Caco-2 (cell line): ENCODE measurements at regions of chr7 and their contacts with region 1.

Region 1: DNA sequence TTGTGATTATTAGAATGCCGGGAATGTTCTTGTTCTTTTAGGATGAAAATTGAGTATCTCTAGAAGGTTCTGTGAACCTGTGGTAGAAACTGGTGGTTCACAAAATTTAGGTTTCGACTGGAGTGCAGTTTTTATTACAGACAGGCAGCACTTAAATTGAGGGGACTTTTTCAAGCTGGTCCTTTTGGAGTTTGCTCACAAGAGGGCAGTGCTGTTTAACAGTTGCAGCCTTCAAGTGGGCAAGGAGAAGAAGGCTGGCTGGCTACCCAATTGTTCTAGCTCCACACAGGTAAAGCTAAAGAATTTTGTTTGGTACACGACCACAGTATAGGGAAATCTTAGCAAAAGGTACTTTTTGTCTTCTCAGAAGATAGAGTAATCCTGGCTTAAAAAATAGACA is 233.6 kb downstream of the SNX13 start:
- DNase-seq: peak; percentile 63 to 68
- H3K4me3 ChIP-seq: no peak overlapping the region
- H3K4me3 Mint-ChIP-seq: no peak overlapping the region
- H3K27ac Mint-ChIP-seq: no peak overlapping the region
- H3K4me1 ChIP-seq: no peaks in the 10 kb centered on the region
- H3K4me1 Mint-ChIP-seq: no peaks in the 10 kb centered on the region
- H3K27me3 ChIP-seq: peaks cover 1% of the 10 kb centered on the region; the same call in 1 of the 2 replicates
- H3K27me3 Mint-ChIP-seq: peaks cover 5% of the 10 kb centered on the region
- CTCF ChIP-seq: peak; percentile 78 to 80

Region 2: GRCh38 chr7:17732083-17732482 is 25.3 kb after region 1 on chr7:
- CTCF ChIA-PET with region 1: no interaction called
- POLR2A ChIA-PET with region 1: no interaction called
- intact Hi-C with region 1: no loop called
- DNase-seq: no peak
- H3K4me3 ChIP-seq: no peak overlapping the region
- H3K4me3 Mint-ChIP-seq: no peak overlapping the region
- H3K27ac Mint-ChIP-seq: no peak overlapping the region
- H3K4me1 ChIP-seq: no peaks in the 10 kb centered on the region
- H3K4me1 Mint-ChIP-seq: no peaks in the 10 kb centered on the region
- H3K27me3 ChIP-seq: no peaks in the 10 kb centered on the region
- H3K27me3 Mint-ChIP-seq: peaks cover 3% of the 10 kb centered on the region
- CTCF ChIP-seq: no peak

Region 3: DNA sequence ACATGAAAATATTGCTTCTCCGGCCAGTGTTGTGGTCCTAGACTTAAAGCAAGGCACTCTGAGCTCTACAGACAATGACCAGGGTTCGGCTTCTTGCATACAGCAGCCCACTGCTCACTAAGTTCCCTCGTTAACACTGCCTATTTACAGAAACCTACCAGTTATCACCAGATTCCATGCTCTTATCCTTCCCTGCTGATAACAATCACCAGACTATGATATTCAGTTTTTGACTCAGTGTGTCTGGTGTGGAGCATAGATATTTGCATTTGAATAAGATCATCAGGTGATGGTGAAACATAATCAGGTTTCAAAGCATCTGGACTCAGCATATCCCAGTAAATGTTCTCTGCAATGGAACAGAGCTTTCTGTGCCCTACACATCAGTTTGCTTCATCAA is 51.3 kb after region 1 on chr7:
- CTCF ChIA-PET with region 1: no interaction called
- POLR2A ChIA-PET with region 1: no interaction called
- intact Hi-C with region 1: loop called (anchors 1 kb)
- DNase-seq: no peak
- H3K4me3 ChIP-seq: no peak overlapping the region
- H3K4me3 Mint-ChIP-seq: no peak overlapping the region
- H3K27ac Mint-ChIP-seq: no peak overlapping the region
- H3K4me1 ChIP-seq: peaks cover 16% of the 10 kb centered on the region
- H3K4me1 Mint-ChIP-seq: peaks cover 12% of the 10 kb centered on the region
- H3K27me3 ChIP-seq: no peaks in the 10 kb centered on the region
- H3K27me3 Mint-ChIP-seq: no peaks in the 10 kb centered on the region
- CTCF ChIP-seq: no peak

Region 4: DNA sequence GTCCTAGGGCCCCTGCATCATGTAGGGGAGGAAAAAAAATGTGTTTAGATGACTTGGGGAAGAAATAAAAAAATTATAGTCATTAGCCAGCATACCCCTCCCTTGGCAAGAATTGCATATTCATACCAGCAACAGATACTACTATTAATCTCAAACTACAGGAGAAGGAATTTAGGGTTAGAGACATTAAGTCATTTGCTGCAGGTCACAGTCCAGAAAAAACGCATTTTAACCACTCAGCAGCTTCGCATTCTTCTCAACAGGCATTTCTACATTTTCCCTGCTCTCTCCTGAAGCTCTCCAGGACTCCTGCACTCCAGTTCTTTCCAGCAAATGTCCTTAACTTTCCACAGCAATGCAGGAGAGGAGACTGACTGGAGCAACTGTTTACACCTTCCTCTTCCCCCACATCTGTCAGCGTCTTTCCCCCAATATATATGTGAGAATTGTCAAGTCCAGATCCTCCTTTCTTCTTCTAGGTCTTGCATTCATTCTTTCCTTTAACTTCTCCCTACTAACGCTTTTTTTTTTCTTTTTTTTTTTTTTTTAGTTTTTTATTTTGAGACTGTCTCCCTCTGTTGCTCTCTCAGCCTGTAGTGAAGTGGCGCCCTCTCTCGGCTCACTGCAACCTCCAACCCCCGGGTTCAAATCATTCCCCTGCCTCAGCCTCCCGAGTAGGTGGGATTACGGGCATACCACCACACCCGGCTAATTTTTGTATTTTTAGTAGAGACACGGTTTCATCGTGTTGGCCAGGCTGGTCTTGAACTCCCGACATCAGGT is 285.3 kb after region 1 on chr7:
- CTCF ChIA-PET with region 1: no interaction called
- POLR2A ChIA-PET with region 1: no interaction called
- intact Hi-C with region 1: loop called (anchors 5 kb)
- DNase-seq: peak in 1 of 2 experiments; percentile 14
- H3K4me3 ChIP-seq: no peak overlapping the region
- H3K4me3 Mint-ChIP-seq: no peak overlapping the region
- H3K27ac Mint-ChIP-seq: no peak overlapping the region
- H3K4me1 ChIP-seq: no peaks in the 10 kb centered on the region
- H3K4me1 Mint-ChIP-seq: peaks cover 3% of the 10 kb centered on the region
- H3K27me3 ChIP-seq: no peaks in the 10 kb centered on the region
- H3K27me3 Mint-ChIP-seq: no peaks in the 10 kb centered on the region
- CTCF ChIP-seq: peak in 1 of 2 experiments; percentile 29

Region 5: DNA sequence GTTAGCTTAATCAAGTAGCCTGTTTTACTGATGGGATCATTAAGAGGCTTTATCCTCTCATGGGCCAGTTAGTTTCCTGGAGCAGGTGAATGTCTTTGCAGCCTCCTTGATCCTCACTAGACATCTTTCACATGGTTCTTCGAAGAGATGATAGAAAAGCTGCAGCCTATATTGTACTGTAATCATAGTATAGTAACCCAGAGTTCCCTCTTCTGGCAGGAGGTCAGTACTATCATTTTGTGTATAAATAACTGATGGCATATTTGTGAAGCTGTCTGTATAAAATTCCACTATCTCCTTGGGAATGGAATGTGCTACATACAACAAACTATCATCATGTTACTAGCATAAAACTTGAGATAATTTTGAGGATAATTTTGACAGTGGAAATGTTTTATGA is 444.7 kb after region 1 on chr7:
- CTCF ChIA-PET with region 1: interaction called, 3 read pairs
- POLR2A ChIA-PET with region 1: no interaction called
- intact Hi-C with region 1: loop called (anchors 2 kb)
- DNase-seq: peak in 1 of 2 experiments; percentile 5
- H3K4me3 ChIP-seq: no peak overlapping the region
- H3K4me3 Mint-ChIP-seq: no peak overlapping the region
- H3K27ac Mint-ChIP-seq: no peak overlapping the region
- H3K4me1 ChIP-seq: no peaks in the 10 kb centered on the region
- H3K4me1 Mint-ChIP-seq: no peaks in the 10 kb centered on the region
- H3K27me3 ChIP-seq: no peaks in the 10 kb centered on the region
- H3K27me3 Mint-ChIP-seq: no peaks in the 10 kb centered on the region
- CTCF ChIP-seq: no peak

Region 6: GRCh38 chr7:18345641-18346234 is 639.0 kb after region 1 on chr7:
- CTCF ChIA-PET with region 1: no interaction called
- POLR2A ChIA-PET with region 1: no interaction called
- intact Hi-C with region 1: loop called (anchors 1 kb)
- DNase-seq: peak in 1 of 2 experiments; percentile 64
- H3K4me3 ChIP-seq: no peak overlapping the region
- H3K4me3 Mint-ChIP-seq: no peak overlapping the region
- H3K27ac Mint-ChIP-seq: no peak overlapping the region
- H3K4me1 ChIP-seq: no peaks in the 10 kb centered on the region
- H3K4me1 Mint-ChIP-seq: no peaks in the 10 kb centered on the region
- H3K27me3 ChIP-seq: no peaks in the 10 kb centered on the region
- H3K27me3 Mint-ChIP-seq: peaks cover 4% of the 10 kb centered on the region
- CTCF ChIP-seq: peak; percentile 76